Natural killer cell (primary cell): ENCODE measurements at regions of chr1 and their contacts with region 1.

Region 1: GRCh38 chr1:44730741-44731512 is at the start of gene RNU5D-1:
- DNase-seq: peak; percentile 91 to 97
- ATAC-seq: peak; percentile 73 to 89 (median 77)
- H3K4me3 ChIP-seq: peak within 1 kb of the TSS; percentile 14
- H3K4me3 Mint-ChIP-seq: peak within 1 kb of the TSS; percentile 80
- H3K27ac ChIP-seq: peak within 1 kb of the TSS; percentile 91
- H3K27ac Mint-ChIP-seq: peak within 1 kb of the TSS; percentile 96
- H3K4me1 ChIP-seq: peaks cover 19% of the 10 kb centered on the region
- H3K4me1 Mint-ChIP-seq: peaks cover 12 to 15% of the 10 kb centered on the region in 2 donors
- H3K27me3 ChIP-seq: no peaks in the 10 kb centered on the region
- H3K27me3 Mint-ChIP-seq: no peaks in the 10 kb centered on the region
- CTCF ChIP-seq: peak; percentile 78
- total RNA-seq, gene RNU5D-1: not detected

Region 2: DNA sequence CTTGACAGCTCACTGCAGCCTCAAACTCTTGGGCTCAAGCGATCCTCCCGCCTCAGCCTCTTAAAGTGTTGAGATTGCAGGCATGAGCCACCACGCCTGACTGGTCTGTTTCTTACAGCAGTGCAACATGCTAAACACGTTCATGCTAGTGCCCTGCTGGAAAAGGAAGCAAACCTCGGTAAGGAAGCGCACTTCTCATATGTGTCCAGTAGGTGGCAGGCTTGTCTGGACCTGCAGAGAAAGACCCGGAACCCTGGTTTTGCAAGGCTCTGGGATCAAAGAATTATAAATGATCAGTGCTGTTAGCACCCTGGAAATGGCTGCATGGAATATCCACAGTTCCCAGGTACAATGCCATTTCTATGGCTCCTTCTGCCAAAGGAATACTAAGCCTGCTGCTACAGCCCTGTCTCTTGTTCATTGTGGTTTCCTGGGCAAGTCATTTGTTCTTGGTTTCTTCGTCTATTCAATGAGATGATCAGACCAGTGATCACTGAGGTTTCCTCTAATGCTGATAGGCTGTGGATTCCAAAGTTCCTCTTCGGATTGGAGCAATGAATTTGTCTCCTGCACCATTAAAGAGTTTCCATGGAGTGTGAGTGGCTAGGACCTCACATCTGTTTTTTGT is 15.9 kb before region 1 on chr1:
- intact Hi-C with region 1: loop called (anchors 2 kb)
- DNase-seq: peak; percentile 53 to 90
- ATAC-seq: peak; percentile 92 to 98 (median 95)
- H3K4me3 ChIP-seq: no peak overlapping the region
- H3K4me3 Mint-ChIP-seq: peak overlapping the region; percentile 64
- H3K27ac ChIP-seq: peak overlapping the region; percentile 15
- H3K27ac Mint-ChIP-seq: peak overlapping the region; percentile 27 to 48
- H3K4me1 ChIP-seq: peaks cover 14% of the 10 kb centered on the region
- H3K4me1 Mint-ChIP-seq: peaks cover 26 to 30% of the 10 kb centered on the region in 2 donors
- H3K27me3 ChIP-seq: no peaks in the 10 kb centered on the region
- H3K27me3 Mint-ChIP-seq: peaks cover 0 to 5% of the 10 kb centered on the region in 2 donors
- CTCF ChIP-seq: peak; percentile 90

Region 3: DNA sequence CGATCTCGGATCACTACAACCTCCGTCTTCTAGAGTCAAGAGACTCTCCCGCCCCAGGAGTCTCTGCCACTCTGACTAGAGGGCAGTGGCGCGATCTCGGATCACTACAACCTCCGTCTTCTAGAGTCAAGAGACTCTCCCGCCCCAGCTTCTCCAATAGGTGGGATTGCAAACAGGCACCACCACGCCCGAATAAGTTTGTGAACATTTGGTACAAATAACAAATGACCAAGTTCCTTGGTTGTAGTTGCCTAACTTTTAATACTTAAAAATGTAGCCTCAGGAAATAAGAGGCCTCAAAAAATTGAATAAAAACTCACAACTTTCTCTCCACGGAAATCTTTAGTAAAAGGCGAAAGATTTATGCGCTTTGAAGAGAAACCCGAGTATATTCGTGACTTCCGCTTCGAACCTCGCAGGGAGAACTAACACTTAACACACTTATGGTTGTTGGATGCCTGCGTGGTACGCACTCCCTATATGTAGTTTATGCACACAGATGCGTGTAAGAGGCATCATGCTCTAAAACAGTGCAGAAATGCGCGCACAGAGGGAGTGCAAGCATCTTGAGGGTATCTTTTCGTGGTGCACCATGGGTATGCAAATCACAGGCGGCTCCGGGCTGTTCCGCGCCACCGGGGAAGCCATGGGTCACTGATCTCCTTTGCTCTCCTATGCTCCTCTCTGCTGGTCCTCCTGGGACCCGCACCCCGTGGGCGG is 88.8 kb after region 1 on chr1:
- intact Hi-C with region 1: loop called (anchors 2 kb)
- DNase-seq: peak; percentile 83 to 91
- ATAC-seq: peak; percentile 79 to 91 (median 81)
- H3K4me3 ChIP-seq: peak overlapping the region; percentile 76
- H3K4me3 Mint-ChIP-seq: peak overlapping the region; percentile 94
- H3K27ac ChIP-seq: peak overlapping the region; percentile 100
- H3K27ac Mint-ChIP-seq: peak overlapping the region; percentile 99 to 100
- H3K4me1 ChIP-seq: peaks cover 30% of the 10 kb centered on the region
- H3K4me1 Mint-ChIP-seq: peaks cover 33 to 44% of the 10 kb centered on the region in 2 donors
- H3K27me3 ChIP-seq: no peaks in the 10 kb centered on the region
- H3K27me3 Mint-ChIP-seq: no peaks in the 10 kb centered on the region
- CTCF ChIP-seq: no peak

Region 4: GRCh38 chr1:45011837-45012638 is 281.1 kb after region 1 on chr1 and contains the start of gene UROD:
- intact Hi-C with region 1: loop called (anchors 2 kb)
- DNase-seq: peak; percentile 82 to 96
- ATAC-seq: peak; percentile 85 to 93 (median 88)
- H3K4me3 ChIP-seq: peak within 1 kb of the TSS; percentile 63
- H3K4me3 Mint-ChIP-seq: peak within 1 kb of the TSS; percentile 89
- H3K27ac ChIP-seq: peak within 1 kb of the TSS; percentile 76
- H3K27ac Mint-ChIP-seq: peak within 1 kb of the TSS; percentile 94 to 97
- H3K4me1 ChIP-seq: peaks cover 39% of the 10 kb centered on the region
- H3K4me1 Mint-ChIP-seq: peaks cover 43 to 62% of the 10 kb centered on the region in 2 donors
- H3K27me3 ChIP-seq: no peaks in the 10 kb centered on the region
- H3K27me3 Mint-ChIP-seq: no peaks in the 10 kb centered on the region
- CTCF ChIP-seq: no peak
- total RNA-seq, gene UROD: 54.5 to 65.4 (median 56.6) TPM

Region 5: GRCh38 chr1:45583264-45583665 is 852.3 kb after region 1 on chr1:
- intact Hi-C with region 1: loop called (anchors 10 kb)
- DNase-seq: peak; percentile 89 to 98
- ATAC-seq: peak; percentile 79 to 91 (median 79)
- H3K4me3 ChIP-seq: peak overlapping the region; percentile 97
- H3K4me3 Mint-ChIP-seq: peak overlapping the region; percentile 99
- H3K27ac ChIP-seq: peak overlapping the region; percentile 91
- H3K27ac Mint-ChIP-seq: peak overlapping the region; percentile 92 to 99
- H3K4me1 ChIP-seq: peaks cover 27% of the 10 kb centered on the region
- H3K4me1 Mint-ChIP-seq: peaks cover 35 to 38% of the 10 kb centered on the region in 2 donors
- H3K27me3 ChIP-seq: no peaks in the 10 kb centered on the region
- H3K27me3 Mint-ChIP-seq: no peaks in the 10 kb centered on the region
- CTCF ChIP-seq: no peak